ENCODE measurements at regions of chr2 and their contacts with region 1.

Region 1: GRCh38 chr2:56183643-56184499 is at the start of gene CCDC85A:
- DNase-seq: peak; percentile 91
- ATAC-seq: peak; percentile 97
- total RNA-seq, gene CCDC85A: 4.3 TPM

Region 2: GRCh38 chr2:56754066-56754615 is 570.3 kb after region 1 on chr2:
- intact Hi-C with region 1: loop called (anchors 5 kb)
- DNase-seq: peak; percentile 56
- ATAC-seq: peak; percentile 96

Region 3: DNA sequence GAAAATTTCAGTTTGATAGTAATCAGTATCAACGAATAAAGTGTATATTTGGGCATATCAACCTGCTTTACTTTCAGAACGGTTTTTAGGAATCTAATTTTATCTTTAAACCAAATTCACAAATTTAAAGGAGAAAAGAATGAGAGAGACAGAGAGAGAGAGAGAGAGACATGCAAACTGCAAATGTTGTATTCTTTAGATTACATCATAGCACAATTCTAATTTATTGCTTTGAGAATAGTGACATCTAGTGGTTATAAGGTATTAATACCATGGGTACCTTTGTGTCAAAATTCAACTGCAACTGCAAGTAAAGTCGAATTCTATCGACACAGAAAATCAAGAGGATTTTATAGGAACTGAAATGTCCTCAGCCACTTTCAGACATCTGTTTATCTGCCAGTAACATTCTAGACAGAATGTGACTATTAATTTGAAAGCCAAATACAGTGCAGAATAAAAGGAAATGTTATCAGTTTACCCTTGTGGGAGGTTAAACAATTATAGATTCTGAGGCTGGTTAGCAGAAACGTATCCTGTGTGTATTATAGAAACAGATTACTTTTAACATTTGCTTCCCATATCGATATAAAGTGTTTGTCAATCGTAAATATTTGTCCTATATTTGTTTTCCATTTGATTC is 1332.9 kb after region 1 on chr2:
- intact Hi-C with region 1: loop called (anchors 2 kb)
- DNase-seq: no peak
- ATAC-seq: peak; percentile 58

Measured in Right ventricle myocardium superior (tissue), 1 donor.